ENCODE measurements at regions of chr7 and their contacts with region 1.

Region 1: GRCh38 chr7:954330-955238 is at the start of gene ADAP1:
- DNase-seq: peak in 3 of 4 donors; percentile 44 to 94 (median 61)
- ATAC-seq: peak; percentile 74
- H3K4me3 ChIP-seq: peak within 1 kb of the TSS; percentile 33 to 66
- H3K27ac ChIP-seq: peak within 1 kb of the TSS in 1 of 2 donors; percentile 85
- H3K4me1 ChIP-seq: peaks cover 6 to 49% of the 10 kb centered on the region in 2 donors
- H3K27me3 ChIP-seq: peaks cover 0 to 61% of the 10 kb centered on the region in 2 donors
- CTCF ChIP-seq: no peak
- polyA plus RNA-seq, gene ADAP1: 5.1 to 8.7 (median 7.6) TPM

Region 2: DNA sequence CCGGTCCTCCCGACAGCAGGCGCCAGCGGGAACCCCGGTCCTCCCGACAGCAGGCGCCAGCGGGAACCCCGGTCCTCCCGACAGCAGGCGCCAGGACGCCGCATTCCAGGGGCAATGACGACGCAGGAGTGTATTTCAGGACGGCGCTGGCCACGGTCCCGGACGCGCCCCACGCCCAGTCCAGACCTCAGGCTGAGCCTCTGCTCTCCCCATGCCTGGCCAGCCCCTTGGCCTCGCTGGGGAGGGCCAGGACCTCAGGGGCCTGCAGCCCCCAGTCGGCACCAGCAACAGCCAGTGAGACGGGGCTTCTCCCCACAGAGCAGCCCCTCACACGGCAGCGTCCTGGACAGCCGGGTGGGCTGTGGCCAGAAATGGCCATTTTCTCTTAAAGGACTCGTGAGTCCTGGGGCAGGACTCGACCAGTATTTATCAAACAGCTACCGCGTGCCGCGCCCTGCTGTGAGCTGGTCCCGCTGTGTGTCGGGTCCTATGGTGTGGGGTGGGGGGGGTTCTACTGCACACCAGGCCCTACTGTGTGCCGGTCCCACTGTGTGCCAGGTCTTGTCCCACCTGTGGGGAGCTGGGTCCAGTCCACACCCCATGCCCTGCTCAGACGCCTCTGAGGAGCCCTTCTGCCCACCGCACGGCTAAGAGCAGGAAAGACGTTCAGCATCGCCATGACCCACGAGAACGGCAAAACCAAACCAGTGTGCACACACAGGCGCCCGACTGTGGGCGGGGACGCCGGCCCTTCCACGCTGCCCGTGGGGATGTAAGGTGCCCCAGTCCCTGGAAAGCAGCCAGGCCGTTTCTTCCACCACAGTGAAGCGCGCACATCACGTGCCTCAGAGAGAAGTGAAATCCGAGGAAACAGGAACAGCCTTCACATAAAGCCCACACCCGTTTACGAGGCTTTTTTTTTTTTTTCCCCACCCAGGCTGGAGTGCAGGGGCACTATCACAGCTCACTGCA is 44.9 kb before region 1 on chr7:
- intact Hi-C with region 1: loop called in 1 of 2 experiments (anchors 5 kb)
- DNase-seq: peak in 3 of 4 donors; percentile 26 to 93 (median 90)
- ATAC-seq: peak; percentile 60
- H3K4me3 ChIP-seq: peak overlapping the region in 1 of 2 donors; percentile 29
- H3K27ac ChIP-seq: peak overlapping the region in 1 of 2 donors; percentile 45
- H3K4me1 ChIP-seq: peaks cover 1 to 38% of the 10 kb centered on the region in 2 donors
- H3K27me3 ChIP-seq: peaks cover 0 to 24% of the 10 kb centered on the region in 2 donors
- CTCF ChIP-seq: no peak

Measured in left lung (tissue), 14 donors.